ENCODE measurements at regions of chr11 and their contacts with region 1.

Region 1: GRCh38 chr11:17391493-17392355 is 3.3 kb upstream of the KCNJ11 start:
- DNase-seq: peak; percentile 14
- CTCF ChIP-seq: no peak

Region 2: DNA sequence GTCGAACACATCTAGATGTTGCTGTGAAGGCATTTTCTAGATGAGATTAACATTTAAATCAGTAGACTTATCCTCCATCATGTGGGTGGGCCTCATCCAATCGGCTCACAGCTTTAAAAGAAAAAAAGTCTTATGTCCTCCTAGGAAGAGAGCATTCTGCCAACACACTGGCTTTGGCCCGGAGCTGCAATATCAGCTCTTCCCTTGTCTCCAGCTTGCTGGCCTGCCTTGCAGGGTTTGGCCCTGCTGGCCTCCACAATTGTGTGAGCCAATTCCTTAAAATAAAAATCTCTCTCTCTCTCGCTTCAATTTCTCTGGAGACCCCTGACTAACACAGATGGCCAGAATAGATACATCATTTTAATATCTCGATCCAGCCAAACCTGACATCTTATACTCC is 98.0 kb after region 1 on chr11:
- in situ Hi-C with region 1: no loop called
- DNase-seq: no peak
- CTCF ChIP-seq: no peak

Region 3: GRCh38 chr11:17504330-17505107 is 112.8 kb after region 1 on chr11:
- in situ Hi-C with region 1: loop called (anchors 5 kb)
- DNase-seq: peak; percentile 83
- CTCF ChIP-seq: peak; percentile 81